Activated B cell treated with CpG ODN at 0.5 μM for 24 hours (primary cell): ENCODE measurements at regions of chr17 and their contacts with region 1.

Region 1: GRCh38 chr17:76271669-76272540 is 6.8 kb downstream of the UBALD2 start:
- DNase-seq: peak; percentile 86
- ATAC-seq: peak; percentile 64
- H3K4me3 Mint-ChIP-seq: peak overlapping the region; percentile 70
- H3K27ac Mint-ChIP-seq: peak overlapping the region; percentile 94
- H3K4me1 Mint-ChIP-seq: peaks cover 94% of the 10 kb centered on the region
- H3K27me3 Mint-ChIP-seq: no peaks in the 10 kb centered on the region
- CTCF ChIP-seq: no peak

Region 2: GRCh38 chr17:75959051-75959838 is 312.7 kb before region 1 on chr17:
- CTCF ChIA-PET with region 1: no interaction called
- POLR2A ChIA-PET with region 1: no interaction called
- intact Hi-C with region 1: no loop called
- DNase-seq: no peak
- ATAC-seq: no peak
- H3K4me3 Mint-ChIP-seq: no peak overlapping the region
- H3K27ac Mint-ChIP-seq: no peak overlapping the region
- H3K4me1 Mint-ChIP-seq: peaks cover 6% of the 10 kb centered on the region
- H3K27me3 Mint-ChIP-seq: no peaks in the 10 kb centered on the region
- CTCF ChIP-seq: no peak

Region 3: DNA sequence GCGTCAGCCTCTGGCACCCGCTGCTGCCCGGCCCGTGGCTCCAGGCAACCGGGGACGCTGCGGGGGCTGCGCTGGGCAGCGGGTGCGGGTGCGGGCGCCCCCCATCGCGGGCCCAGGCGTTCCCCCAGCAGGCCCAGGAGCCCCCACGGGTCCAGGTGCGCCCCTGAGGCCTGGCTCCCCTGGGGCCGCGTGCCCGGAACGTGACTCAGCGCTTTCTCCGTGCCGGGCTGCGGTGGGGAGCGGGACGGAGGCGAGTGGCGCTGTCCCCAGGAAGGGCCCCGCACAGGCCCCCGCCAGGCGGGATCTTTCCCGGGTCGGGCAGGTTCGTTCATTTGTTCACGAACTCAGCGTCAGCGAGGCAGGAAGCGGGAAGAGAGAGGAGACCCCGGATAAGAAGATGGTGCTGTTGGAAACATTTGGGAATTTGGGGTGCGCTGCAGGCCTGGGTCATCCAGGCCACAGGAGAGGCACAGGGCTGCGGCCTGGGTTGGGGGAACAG is 149.9 kb before region 1 on chr17:
- CTCF ChIA-PET with region 1: interaction called, 22 read pairs
- POLR2A ChIA-PET with region 1: interaction called, 257 read pairs
- intact Hi-C with region 1: no loop called
- DNase-seq: no peak
- ATAC-seq: peak; percentile 29
- H3K4me3 Mint-ChIP-seq: peak overlapping the region; percentile 62
- H3K27ac Mint-ChIP-seq: peak overlapping the region; percentile 50
- H3K4me1 Mint-ChIP-seq: peaks cover 17% of the 10 kb centered on the region
- H3K27me3 Mint-ChIP-seq: peaks cover 3% of the 10 kb centered on the region
- CTCF ChIP-seq: no peak

Region 4: DNA sequence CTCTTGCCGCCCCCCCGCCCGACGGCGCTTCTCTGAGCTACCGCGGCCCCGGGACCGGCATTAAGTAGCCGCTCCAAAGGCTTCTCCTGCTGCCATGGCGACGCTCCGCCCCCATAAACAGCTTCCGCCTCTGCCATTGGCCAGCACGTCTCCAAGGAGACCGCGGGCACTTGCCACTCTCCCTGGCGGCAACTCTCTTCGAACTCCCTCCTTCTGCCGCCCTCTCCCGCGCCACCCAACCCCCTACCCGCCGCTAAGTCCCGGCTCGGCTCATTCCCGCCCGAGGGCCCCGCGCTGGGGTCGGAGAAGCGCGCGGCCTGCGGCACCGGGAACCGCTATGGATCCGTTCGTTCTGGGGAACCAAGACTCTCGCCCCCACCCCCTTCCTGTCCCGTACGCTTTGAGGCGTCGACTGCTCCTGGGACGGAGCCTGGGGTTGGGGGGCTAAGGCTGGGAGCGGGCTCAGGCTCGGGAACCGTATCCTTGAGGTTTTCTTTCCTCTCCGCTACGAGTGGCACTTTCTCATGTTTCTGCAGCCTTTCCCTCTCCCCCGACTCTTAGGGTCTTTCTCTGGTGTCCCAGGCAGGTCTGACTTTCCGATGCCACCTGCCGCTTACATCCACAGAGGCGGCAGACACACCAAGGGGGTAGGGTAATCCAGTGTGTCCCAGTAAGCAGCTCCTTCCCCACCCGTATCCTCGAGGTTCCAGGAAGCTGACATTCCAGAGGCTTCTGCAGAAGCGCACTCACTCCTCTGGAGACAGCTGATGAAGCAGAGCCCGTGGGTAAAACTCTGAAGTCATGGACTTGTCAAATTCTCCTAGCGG is 130.5 kb before region 1 on chr17 and contains the start of gene FOXJ1:
- CTCF ChIA-PET with region 1: interaction called, 3 read pairs
- POLR2A ChIA-PET with region 1: interaction called, 25 read pairs
- intact Hi-C with region 1: loop called (anchors 1 kb)
- DNase-seq: peak; percentile 91
- ATAC-seq: peak; percentile 75
- H3K4me3 Mint-ChIP-seq: peak within 1 kb of the TSS; percentile 80
- H3K27ac Mint-ChIP-seq: peak within 1 kb of the TSS; percentile 61
- H3K4me1 Mint-ChIP-seq: peaks cover 60% of the 10 kb centered on the region
- H3K27me3 Mint-ChIP-seq: peaks cover 10% of the 10 kb centered on the region
- CTCF ChIP-seq: no peak
- total RNA-seq, gene FOXJ1: 0.39 and 0.44 TPM in 2 replicates

Region 5: DNA sequence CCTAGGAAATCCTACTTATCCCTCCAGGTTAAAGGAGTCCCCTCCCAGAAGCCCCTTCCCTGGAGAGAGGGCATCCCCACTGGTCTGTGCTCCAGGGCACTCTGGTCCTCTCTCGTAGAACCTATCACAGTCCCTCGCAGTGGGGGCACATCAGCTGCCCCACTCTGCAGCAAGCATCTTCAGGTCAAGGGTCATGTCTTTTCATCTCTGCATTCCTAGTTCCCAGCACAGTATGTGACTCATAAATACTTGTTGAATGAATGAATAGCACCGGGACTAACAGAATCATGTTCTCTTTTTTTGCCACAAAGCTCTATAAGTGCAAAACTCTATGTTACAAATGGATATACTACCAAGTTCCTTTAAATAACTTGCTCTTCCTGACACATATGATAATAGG is 67.6 kb before region 1 on chr17:
- CTCF ChIA-PET with region 1: no interaction called
- POLR2A ChIA-PET with region 1: interaction called, 10 read pairs
- intact Hi-C with region 1: no loop called
- DNase-seq: no peak
- ATAC-seq: no peak
- H3K4me3 Mint-ChIP-seq: no peak overlapping the region
- H3K27ac Mint-ChIP-seq: no peak overlapping the region
- H3K4me1 Mint-ChIP-seq: peaks cover 17% of the 10 kb centered on the region
- H3K27me3 Mint-ChIP-seq: no peaks in the 10 kb centered on the region
- CTCF ChIP-seq: no peak

Region 6: GRCh38 chr17:76240461-76241203 is 31.3 kb before region 1 on chr17 and contains the start of gene RNF157:
- CTCF ChIA-PET with region 1: no interaction called
- POLR2A ChIA-PET with region 1: interaction called, 135 read pairs
- intact Hi-C with region 1: loop called (anchors 5 kb)
- DNase-seq: peak; percentile 62
- ATAC-seq: peak; percentile 93
- H3K4me3 Mint-ChIP-seq: peak within 1 kb of the TSS; percentile 87
- H3K27ac Mint-ChIP-seq: peak within 1 kb of the TSS; percentile 56
- H3K4me1 Mint-ChIP-seq: peaks cover 12% of the 10 kb centered on the region
- H3K27me3 Mint-ChIP-seq: peaks cover 33% of the 10 kb centered on the region
- CTCF ChIP-seq: no peak
- total RNA-seq, gene RNF157: 3.1 and 3.5 TPM in 2 replicates

Region 7: DNA sequence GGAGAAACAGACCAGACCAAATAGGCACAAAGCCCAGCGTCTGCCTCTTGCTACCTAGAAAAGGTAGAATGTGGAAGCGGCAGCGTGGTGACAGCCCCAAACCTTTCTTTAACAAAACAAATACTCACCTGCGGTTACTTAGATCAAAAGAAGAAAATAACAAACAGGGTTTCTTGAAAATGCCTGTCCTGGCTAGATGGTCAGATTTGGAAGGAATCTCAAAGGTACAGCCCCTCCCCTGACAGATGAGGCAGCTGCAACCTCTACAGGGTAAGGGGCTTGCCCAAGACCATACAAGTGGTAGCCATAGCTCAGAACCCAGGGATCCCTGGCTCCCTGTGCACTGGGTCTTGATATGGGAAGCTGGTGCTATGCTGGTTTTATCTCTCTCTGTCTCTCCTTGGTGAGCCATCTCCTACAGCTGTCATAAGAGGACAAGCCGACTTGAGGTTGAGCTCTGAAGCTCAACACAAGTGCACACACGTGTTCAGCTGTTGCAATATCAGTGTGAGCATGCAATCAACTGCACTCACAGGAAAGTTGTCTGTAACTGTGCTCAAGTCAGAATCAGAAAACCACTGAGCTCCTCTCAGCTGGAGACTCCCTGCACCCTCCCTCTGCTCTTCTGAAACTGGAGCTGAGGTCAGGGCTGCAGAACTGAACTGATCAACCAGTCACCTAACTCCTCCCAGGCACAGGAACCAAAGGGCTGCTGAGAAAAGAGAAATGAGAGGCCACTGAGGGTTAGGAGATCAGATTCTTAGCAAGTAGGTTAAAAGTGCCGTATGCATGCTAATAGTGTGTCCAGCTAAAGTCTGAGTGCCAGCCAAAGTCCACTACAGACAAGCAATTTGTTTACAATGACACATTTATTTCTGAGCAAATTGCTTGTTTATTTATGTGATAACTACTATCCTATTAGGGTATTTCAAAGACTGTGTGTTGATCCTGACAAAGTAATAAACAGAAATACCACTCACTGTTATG is 25.5 kb before region 1 on chr17:
- CTCF ChIA-PET with region 1: interaction called, 3 read pairs
- POLR2A ChIA-PET with region 1: interaction called, 135 read pairs
- intact Hi-C with region 1: loop called (anchors 2 kb)
- DNase-seq: no peak
- ATAC-seq: peak; percentile 98
- H3K4me3 Mint-ChIP-seq: peak overlapping the region; percentile 56
- H3K27ac Mint-ChIP-seq: peak overlapping the region; percentile 73
- H3K4me1 Mint-ChIP-seq: peaks cover 24% of the 10 kb centered on the region
- H3K27me3 Mint-ChIP-seq: peaks cover 28% of the 10 kb centered on the region
- CTCF ChIP-seq: no peak

Region 8: GRCh38 chr17:76252040-76252954 is 19.6 kb before region 1 on chr17:
- CTCF ChIA-PET with region 1: interaction called, 3 read pairs
- POLR2A ChIA-PET with region 1: interaction called, 135 read pairs
- intact Hi-C with region 1: loop called (anchors 2 kb)
- DNase-seq: no peak
- ATAC-seq: peak; percentile 97
- H3K4me3 Mint-ChIP-seq: peak overlapping the region; percentile 73
- H3K27ac Mint-ChIP-seq: peak overlapping the region; percentile 85
- H3K4me1 Mint-ChIP-seq: peaks cover 41% of the 10 kb centered on the region
- H3K27me3 Mint-ChIP-seq: no peaks in the 10 kb centered on the region
- CTCF ChIP-seq: no peak

Region 9: GRCh38 chr17:76376318-76377133 is 104.6 kb after region 1 on chr17:
- CTCF ChIA-PET with region 1: no interaction called
- POLR2A ChIA-PET with region 1: no interaction called
- intact Hi-C with region 1: no loop called
- DNase-seq: no peak
- ATAC-seq: no peak
- H3K4me3 Mint-ChIP-seq: no peak overlapping the region
- H3K27ac Mint-ChIP-seq: no peak overlapping the region
- H3K4me1 Mint-ChIP-seq: no peaks in the 10 kb centered on the region
- H3K27me3 Mint-ChIP-seq: peaks cover 5% of the 10 kb centered on the region
- CTCF ChIP-seq: no peak